Activated T-helper 1 cell treated with anti-CD3 and anti-CD28 coated beads, Interleukin-12 subunit alpha, Interleukin-12 subunit beta, Interleukin-2, Interleukin-4 antibody, amounts not matched to agents 30 ng/mL and 10 ng/mL and 1 ng/mL, durations not matched to agents 14 hours and 24 hours and 36 hours (primary cell): ENCODE measurements at regions of chr22 and their contacts with region 1.

Region 1: GRCh38 chr22:38681784-38682335 is at the start of gene TOMM22:
- DNase-seq: peak; percentile 83
- H3K4me3 Mint-ChIP-seq: peak within 1 kb of the TSS; percentile 98
- H3K27ac Mint-ChIP-seq: peak within 1 kb of the TSS; percentile 96
- H3K4me1 Mint-ChIP-seq: peaks cover 21% of the 10 kb centered on the region
- H3K27me3 Mint-ChIP-seq: no peaks in the 10 kb centered on the region
- total RNA-seq, gene TOMM22: 153 and 156 TPM in 2 replicates

Region 2: DNA sequence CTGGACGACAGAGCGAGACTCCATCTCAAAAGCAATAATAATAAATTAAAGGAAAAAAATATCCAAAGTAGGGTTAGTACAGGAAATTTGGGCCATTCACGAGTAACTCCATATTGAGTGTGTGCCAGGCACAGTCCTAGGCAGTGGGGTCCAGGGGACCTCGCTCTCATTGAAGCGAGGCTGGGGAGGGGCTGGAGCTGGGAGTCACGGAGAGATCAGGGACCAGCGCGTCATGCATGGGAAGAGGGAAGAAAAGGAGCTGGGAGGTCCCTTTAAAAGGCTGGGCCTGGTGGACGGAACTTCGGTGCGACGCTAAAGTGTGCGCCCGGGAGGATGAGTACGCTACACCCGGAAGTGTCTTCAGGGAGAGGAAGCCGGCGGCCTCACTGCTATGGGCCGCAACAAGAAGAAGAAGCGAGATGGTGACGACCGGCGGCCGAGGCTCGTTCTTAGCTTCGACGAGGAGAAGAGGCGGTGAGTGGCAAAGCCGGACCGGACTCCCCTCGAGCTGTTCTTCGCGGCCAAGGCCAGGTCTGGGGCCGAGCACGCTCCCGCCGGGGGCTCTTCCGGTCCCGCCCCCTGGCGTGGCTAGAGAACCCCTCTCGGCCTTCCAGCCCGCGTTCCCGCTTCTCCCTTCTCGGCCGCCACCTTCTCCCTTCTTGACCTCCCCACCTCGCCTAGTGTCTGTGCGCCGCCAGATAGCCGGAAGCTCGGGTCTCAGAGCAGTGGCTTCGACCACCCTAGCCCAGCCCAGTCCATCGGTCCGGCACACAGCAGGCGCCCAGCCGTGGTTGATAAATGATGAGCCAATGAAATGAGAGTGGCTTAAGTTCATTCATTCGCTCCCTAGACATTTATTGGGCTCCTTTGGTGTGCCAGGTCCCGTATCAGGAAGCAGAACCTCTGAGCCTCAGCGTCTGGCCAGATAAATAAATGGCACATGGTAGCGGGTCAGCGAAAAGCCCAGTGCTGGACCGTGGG is 995.6 kb before region 1 on chr22 and contains the start of gene NOL12:
- intact Hi-C with region 1: loop called (anchors 2 kb)
- DNase-seq: peak; percentile 74
- H3K4me3 Mint-ChIP-seq: peak within 1 kb of the TSS; percentile 96
- H3K27ac Mint-ChIP-seq: peak within 1 kb of the TSS; percentile 97
- H3K4me1 Mint-ChIP-seq: peaks cover 24% of the 10 kb centered on the region
- H3K27me3 Mint-ChIP-seq: no peaks in the 10 kb centered on the region
- total RNA-seq, gene NOL12: 67.8 and 70.0 TPM in 2 replicates

Region 3: GRCh38 chr22:38656256-38657044 is 25.4 kb before region 1 on chr22 and contains the starts of genes CBY1 and FAM227A:
- intact Hi-C with region 1: loop called (anchors 1 kb)
- DNase-seq: peak; percentile 83
- H3K4me3 Mint-ChIP-seq: peak within 1 kb of the TSS; percentile 93
- H3K27ac Mint-ChIP-seq: peak within 1 kb of the TSS; percentile 98
- H3K4me1 Mint-ChIP-seq: peaks cover 16% of the 10 kb centered on the region
- H3K27me3 Mint-ChIP-seq: no peaks in the 10 kb centered on the region
- total RNA-seq, gene CBY1: 8.6 and 8.8 TPM in 2 replicates
- total RNA-seq, gene FAM227A: 0.16 and 0.78 TPM in 2 replicates

Region 4: GRCh38 chr22:38696606-38697424 is 15.0 kb after region 1 on chr22:
- intact Hi-C with region 1: loop called (anchors 1 kb)
- DNase-seq: no peak
- H3K4me3 Mint-ChIP-seq: peak overlapping the region; percentile 90
- H3K27ac Mint-ChIP-seq: peak overlapping the region; percentile 94
- H3K4me1 Mint-ChIP-seq: peaks cover 64% of the 10 kb centered on the region
- H3K27me3 Mint-ChIP-seq: peaks cover 3% of the 10 kb centered on the region

Region 5: GRCh38 chr22:38793721-38794466 is 112.0 kb after region 1 on chr22 and contains the start of gene DNAL4:
- intact Hi-C with region 1: loop called (anchors 1 kb)
- DNase-seq: peak; percentile 90
- H3K4me3 Mint-ChIP-seq: peak within 1 kb of the TSS; percentile 93
- H3K27ac Mint-ChIP-seq: peak within 1 kb of the TSS; percentile 80
- H3K4me1 Mint-ChIP-seq: peaks cover 22% of the 10 kb centered on the region
- H3K27me3 Mint-ChIP-seq: peaks cover 4% of the 10 kb centered on the region
- total RNA-seq, gene DNAL4: 5.0 TPM in 2 replicates